ENCODE measurements at regions of chr19 and their contacts with region 1.

Region 1: DNA sequence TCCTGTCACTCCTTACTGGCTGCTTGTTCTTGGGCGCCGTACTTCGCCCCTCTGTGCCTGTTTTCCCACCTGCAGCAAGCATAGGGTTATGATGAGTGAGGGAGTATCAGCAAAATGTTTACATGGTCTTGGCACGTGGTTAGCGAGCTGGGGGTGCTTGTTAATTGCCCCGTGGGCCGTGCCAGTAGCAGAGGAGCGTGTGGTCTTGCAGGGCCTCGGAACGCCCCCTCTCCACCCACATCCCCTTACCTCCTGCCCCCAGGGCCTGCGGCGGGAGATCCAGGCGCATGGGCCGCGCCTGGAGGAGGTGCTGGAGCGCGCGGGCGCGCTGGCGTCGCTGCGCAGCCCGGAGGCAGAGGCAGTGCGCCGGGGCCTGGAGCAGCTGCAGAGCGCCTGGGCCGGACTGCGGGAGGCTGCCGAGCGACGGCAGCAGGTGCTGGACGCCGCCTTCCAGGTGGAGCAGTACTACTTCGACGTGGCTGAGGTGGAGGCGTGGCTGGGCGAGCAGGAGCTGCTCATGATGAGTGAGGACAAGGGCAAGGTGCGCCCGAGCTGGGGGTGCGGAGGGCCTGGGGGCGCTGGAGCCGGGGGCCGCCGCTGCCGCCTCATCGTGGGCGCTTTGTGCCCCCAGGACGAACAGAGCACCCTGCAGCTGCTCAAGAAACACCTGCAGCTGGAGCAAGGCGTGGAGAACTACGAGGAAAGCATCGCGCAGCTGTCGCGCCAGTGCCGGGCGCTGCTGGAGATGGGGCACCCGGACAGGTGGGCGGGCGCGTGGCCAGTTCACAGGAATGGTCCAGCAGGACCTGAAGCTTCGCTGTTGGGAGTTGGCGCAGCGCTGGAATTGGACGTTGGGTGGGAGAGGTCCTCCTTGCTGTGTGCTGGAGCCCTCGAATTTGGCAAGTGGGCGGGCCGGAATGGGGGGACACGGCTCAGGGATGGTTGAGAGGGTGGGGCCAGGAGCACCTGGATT is 22.5 kb upstream of the SHKBP1 start:
- DNase-seq: no peak
- ATAC-seq: no peak
- H3K4me3 ChIP-seq: no peak overlapping the region
- H3K27ac ChIP-seq: no peak overlapping the region
- H3K4me1 ChIP-seq: no peaks in the 10 kb centered on the region
- H3K27me3 ChIP-seq: peaks cover 0 to 26% (median 6%) of the 10 kb centered on the region in 3 donors
- CTCF ChIP-seq: no peak

Region 2: GRCh38 chr19:38993271-38993670 is 1560.9 kb before region 1 on chr19:
- intact Hi-C with region 1: loop called in 1 of 2 experiments (anchors 5 kb)
- DNase-seq: no peak
- ATAC-seq: no peak
- H3K4me3 ChIP-seq: no peak overlapping the region
- H3K27ac ChIP-seq: no peak overlapping the region
- H3K4me1 ChIP-seq: no peaks in the 10 kb centered on the region
- H3K27me3 ChIP-seq: peaks cover 0 to 15% (median 4%) of the 10 kb centered on the region in 3 donors
- CTCF ChIP-seq: no peak

Region 3: GRCh38 chr19:40502647-40503319 is 51.4 kb before region 1 on chr19:
- intact Hi-C with region 1: no loop called
- DNase-seq: no peak
- ATAC-seq: no peak
- H3K4me3 ChIP-seq: no peak overlapping the region
- H3K27ac ChIP-seq: no peak overlapping the region
- H3K4me1 ChIP-seq: no peaks in the 10 kb centered on the region
- H3K27me3 ChIP-seq: no peaks in the 10 kb centered on the region
- CTCF ChIP-seq: no peak

Region 4: DNA sequence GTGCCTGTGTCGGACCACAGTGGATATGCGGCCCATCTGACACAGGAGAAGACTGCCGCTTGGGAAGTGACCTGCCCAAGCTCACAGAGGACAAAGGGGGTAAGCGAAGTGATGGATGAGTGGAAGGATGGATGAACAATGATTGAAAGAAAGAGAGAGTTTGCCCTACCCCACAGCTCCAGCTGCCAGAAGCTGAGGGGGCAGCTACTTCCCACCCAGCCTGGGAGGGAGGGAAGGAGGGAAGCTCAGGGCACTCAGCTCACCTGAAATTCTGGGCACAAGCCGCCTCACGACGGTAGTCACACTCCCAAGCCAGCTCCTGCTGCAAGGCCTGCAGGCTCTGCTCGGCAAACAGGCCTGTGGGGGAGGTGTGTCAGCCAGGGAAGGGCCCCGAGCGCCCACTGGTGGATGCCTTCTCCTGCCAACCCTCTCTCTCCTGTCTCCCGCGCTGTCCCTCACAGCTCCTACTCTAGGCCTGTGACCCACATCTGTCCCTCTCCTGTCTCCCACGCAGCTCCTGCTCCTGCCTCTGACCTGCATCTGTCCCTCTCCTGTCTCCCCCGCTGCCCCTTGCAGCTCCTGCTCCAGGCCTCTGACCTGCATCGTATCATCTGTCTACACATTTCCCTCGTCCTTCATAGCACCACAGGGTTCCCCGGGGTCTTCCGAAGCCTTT is 148.3 kb after region 1 on chr19:
- intact Hi-C with region 1: no loop called
- DNase-seq: no peak
- ATAC-seq: peak in 3 of 4 donors; percentile 25 to 44 (median 28)
- H3K4me3 ChIP-seq: no peak overlapping the region
- H3K27ac ChIP-seq: no peak overlapping the region
- H3K4me1 ChIP-seq: no peaks in the 10 kb centered on the region
- H3K27me3 ChIP-seq: no peaks in the 10 kb centered on the region
- CTCF ChIP-seq: no peak